GM12878 (cell line): ENCODE measurements at regions of chr19 and their contacts with region 1.

Region 1: DNA sequence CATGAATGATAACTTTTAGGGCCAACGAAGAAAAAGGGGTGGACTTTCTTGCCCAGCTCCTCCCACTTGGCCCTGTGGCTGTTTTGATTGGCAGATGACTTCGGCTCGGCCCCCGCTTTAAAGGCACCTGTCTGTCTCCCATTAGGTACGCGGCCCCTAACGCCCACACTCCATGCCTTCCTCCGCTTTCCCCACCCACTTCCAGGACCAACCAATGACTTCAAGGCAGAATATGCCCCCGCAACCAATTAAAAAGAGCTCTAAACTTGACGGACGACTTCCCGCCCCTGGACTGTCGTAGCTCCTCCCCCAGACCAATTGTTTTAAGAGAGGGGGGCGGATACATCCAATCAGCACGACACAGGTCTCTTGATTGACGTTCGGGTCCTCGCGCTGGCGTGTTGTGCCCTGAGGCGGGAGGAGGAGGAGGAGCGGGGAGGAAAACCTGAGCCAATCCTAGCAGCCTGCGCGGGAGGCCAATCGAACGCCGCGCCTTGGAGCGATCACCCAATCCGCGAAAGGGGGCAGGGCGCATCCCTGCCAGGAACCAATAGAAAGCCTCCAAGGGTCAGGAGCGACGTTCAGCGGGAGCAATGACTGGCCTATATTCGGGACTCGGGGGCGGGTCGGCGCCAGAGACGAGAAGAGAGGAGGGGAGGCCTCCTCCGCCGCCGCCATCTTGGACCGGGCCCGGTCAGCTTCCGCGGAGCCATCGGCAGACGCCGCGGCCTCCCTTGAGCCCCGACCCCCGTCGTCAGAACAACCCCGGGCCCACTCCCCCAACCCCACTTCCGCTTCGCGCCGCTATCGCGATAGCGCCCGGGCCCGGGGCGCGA is at the start of gene CNOT3:
- DNase-seq: peak; percentile 100
- ATAC-seq: peak; percentile 92
- H3K4me3 ChIP-seq: peak within 1 kb of the TSS; percentile 91
- H3K27ac ChIP-seq: peak within 1 kb of the TSS; percentile 90
- H3K4me1 ChIP-seq: peaks cover 19% of the 10 kb centered on the region
- H3K27me3 ChIP-seq: no peaks in the 10 kb centered on the region
- CTCF ChIP-seq: no peak
- EP300 ChIP-seq: no peak
- POLR2A ChIP-seq: peak; percentile 91
- RAD21 ChIP-seq: no peak
- polyA plus RNA-seq, gene CNOT3: 0.14 to 0.62 TPM

Region 2: DNA sequence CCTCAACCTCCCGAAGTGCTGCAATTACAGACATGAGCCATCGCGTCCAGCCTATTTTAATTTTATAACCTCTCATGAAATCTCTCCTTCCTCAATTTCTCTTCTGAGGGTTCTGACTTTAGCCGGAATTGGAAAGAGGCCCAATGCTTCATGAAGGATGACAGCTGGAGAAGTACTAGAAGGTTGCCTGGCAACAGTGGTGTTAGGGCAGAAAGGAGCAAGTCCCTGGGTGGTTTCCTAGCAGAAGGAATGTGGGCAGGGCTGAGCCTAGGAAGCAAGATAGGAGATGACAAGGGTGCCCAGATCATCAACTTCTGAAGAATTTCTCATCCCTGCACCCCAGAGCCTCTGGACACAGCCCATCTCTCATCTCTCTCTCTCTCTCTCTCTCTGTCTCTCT is 120.0 kb before region 1 on chr19:
- CTCF ChIA-PET with region 1: no interaction called
- POLR2A ChIA-PET with region 1: no interaction called
- RAD21 ChIA-PET with region 1: no interaction called
- SMC1A ChIA-PET with region 1: no interaction called
- in situ Hi-C with region 1: no loop called
- intact Hi-C with region 1: no loop called
- DNase-seq: no peak
- ATAC-seq: no peak
- H3K4me3 ChIP-seq: no peak overlapping the region
- H3K27ac ChIP-seq: no peak overlapping the region
- H3K4me1 ChIP-seq: no peaks in the 10 kb centered on the region
- H3K27me3 ChIP-seq: no peaks in the 10 kb centered on the region
- CTCF ChIP-seq: no peak
- EP300 ChIP-seq: no peak
- POLR2A ChIP-seq: no peak
- RAD21 ChIP-seq: no peak

Region 3: DNA sequence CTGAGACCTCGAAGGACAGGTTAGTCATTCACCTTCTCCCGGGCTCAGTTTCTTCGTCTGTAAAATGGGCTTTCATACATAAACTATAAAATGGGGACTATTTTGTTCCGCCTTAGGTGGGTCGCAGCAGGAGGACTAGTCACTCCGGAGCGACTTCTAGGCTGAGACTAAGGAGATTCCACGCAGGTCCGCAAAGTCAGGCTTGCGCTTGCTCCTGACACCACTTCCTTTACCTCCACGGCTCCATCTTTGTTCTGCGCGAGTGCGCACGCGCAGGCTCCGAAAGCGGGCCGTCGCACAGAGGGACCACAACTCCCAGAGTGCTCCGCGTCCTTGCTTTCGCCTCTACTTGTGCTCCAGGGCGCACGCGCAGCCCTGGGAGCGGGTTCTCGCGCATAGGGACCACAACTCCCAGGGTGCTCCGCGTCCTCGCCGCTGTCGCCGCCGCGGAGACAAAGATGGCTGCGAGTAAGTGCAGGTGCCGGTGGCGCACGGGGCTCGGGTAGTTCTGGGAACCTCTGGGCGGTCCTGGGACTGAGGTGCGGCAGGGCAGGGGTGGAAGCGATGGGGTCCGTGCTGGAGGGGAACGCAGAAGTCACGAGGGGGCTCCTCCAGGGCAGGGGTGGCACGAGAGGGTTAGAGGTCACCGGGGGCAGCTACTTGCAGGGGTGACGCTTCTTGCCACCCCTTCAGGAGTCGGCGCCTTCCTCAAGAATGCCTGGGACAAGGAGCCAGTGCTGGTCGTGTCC is 34.7 kb before region 1 on chr19 and contains the start of gene NDUFA3:
- CTCF ChIA-PET with region 1: interaction called, 3 read pairs
- POLR2A ChIA-PET with region 1: interaction called, 6 read pairs
- RAD21 ChIA-PET with region 1: no interaction called
- SMC1A ChIA-PET with region 1: no interaction called
- in situ Hi-C with region 1: no loop called
- intact Hi-C with region 1: loop called (anchors 1 kb)
- DNase-seq: peak; percentile 95
- ATAC-seq: peak; percentile 99
- H3K4me3 ChIP-seq: peak within 1 kb of the TSS; percentile 85
- H3K27ac ChIP-seq: peak within 1 kb of the TSS; percentile 75
- H3K4me1 ChIP-seq: no peaks in the 10 kb centered on the region
- H3K27me3 ChIP-seq: no peaks in the 10 kb centered on the region
- CTCF ChIP-seq: no peak
- EP300 ChIP-seq: no peak
- POLR2A ChIP-seq: peak; percentile 94
- RAD21 ChIP-seq: no peak
- polyA plus RNA-seq, gene NDUFA3: 295 to 302 TPM

Region 4: DNA sequence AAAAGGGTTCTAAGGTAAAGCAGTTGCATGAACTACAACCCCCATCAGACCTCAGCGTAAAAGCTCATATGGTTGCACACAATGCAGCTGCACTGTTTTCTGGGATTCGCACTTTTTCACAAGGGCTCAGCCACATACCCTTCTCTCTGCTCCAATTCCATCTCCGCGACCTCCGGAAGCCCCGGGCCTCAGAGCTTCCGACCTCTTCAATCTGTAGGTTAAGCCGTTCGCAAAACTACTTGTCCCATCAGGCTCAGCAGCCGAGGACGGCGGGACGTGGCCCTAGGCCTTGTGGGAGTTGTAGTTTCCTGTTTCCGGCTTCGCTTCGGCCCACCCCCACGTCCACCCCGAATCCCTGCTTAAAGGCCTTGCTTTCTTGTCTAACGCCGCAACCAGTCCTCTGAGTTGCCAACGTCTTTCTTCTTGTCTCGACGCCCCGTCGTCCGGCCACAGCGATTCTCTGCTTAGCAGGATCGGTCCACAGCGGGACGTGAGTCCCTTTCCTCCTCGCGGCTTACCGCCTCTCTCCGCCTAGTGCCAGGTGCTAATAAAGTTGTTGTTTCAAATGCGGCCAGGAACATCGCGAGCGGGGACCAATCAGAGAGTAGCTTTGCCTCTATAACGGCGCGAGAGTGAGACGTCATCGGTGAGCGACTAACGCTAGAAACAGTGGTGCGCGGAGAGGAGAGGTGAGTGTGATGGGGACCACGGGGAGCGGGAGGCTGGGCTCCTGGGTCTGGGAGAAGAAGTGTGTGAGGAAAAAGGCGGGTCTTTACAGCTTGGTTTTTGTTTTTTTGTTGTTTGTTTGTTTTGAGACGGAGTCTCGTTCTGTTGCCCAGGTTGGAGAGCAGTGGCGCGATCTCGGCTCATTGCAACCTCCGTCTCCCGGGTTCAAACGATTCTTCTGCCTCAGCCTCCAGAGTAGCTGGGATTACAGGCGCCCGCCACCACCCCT is 21.9 kb before region 1 on chr19 and contains the starts of genes PRPF31 and TFPT:
- CTCF ChIA-PET with region 1: no interaction called
- POLR2A ChIA-PET with region 1: interaction called, 25 read pairs
- RAD21 ChIA-PET with region 1: interaction called, 19 read pairs
- SMC1A ChIA-PET with region 1: interaction called, 6 read pairs
- in situ Hi-C with region 1: no loop called
- intact Hi-C with region 1: no loop called
- DNase-seq: peak; percentile 95
- ATAC-seq: peak; percentile 97
- H3K4me3 ChIP-seq: peak within 1 kb of the TSS; percentile 95
- H3K27ac ChIP-seq: peak within 1 kb of the TSS; percentile 79
- H3K4me1 ChIP-seq: peaks cover 10% of the 10 kb centered on the region
- H3K27me3 ChIP-seq: no peaks in the 10 kb centered on the region
- CTCF ChIP-seq: no peak
- EP300 ChIP-seq: no peak; a peak in 1 of 4 replicates
- POLR2A ChIP-seq: peak; percentile 77; the same call in 1 of the 2 replicates
- RAD21 ChIP-seq: no peak
- polyA plus RNA-seq, gene PRPF31: 2.7 to 9.8 TPM
- polyA plus RNA-seq, gene TFPT: 1.7 to 10.9 TPM

Region 5: DNA sequence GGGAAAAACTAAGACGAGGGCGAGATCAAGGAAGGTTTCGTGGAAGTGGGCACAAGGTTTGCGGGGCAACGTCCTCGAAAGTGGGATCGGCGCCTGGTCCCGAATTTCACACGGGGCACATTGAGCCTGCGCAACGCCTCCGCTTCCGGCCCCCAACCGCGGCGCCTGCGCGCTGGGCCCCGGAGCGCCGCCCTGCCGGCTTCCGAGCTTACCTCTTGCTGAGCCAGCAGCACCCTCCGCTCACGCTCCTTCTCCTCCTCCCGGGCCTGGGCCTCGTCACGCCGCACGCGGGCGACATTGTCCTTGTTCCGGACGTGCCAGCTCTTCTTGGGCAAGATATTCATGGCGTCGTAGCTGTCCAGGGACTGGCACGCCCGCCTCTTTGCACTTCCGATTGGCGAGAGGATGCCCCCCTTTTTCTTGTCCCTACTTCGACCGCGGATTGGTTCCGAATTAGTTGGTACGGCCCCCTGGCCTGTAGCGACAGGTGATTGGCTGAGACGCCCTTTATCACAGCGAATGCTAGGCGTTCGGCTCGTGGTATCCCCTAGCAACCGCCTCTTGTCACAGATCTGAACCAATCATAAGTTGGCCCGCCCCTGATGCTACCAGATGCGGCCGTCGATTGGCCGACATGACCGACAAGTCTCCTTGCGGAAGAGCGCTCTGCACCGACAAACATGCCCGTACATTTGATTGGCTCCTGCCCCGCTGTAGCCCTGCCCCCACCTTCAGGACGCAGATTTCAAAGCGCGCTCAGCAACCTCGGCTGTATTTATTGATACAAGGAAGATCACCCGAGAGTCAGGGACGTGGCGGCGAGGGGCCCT is 22.3 kb after region 1 on chr19 and contains the start of gene LENG1:
- CTCF ChIA-PET with region 1: interaction called, 15 read pairs
- POLR2A ChIA-PET with region 1: interaction called, 30 read pairs
- RAD21 ChIA-PET with region 1: interaction called, 14 read pairs
- SMC1A ChIA-PET with region 1: interaction called, 5 read pairs
- in situ Hi-C with region 1: no loop called
- intact Hi-C with region 1: loop called (anchors 1 kb)
- DNase-seq: peak; percentile 99
- ATAC-seq: peak; percentile 95
- H3K4me3 ChIP-seq: peak within 1 kb of the TSS; percentile 95
- H3K27ac ChIP-seq: peak within 1 kb of the TSS; percentile 93
- H3K4me1 ChIP-seq: peaks cover 4% of the 10 kb centered on the region; the same call in 1 of the 2 replicates
- H3K27me3 ChIP-seq: no peaks in the 10 kb centered on the region
- CTCF ChIP-seq: peak in 2 of 3 experiments; percentile 16 to 34; a peak in 3 of 6 replicates
- EP300 ChIP-seq: no peak
- POLR2A ChIP-seq: peak; percentile 94
- RAD21 ChIP-seq: no peak
- polyA plus RNA-seq, gene LENG1: 0.21 to 1.1 TPM

Region 6: DNA sequence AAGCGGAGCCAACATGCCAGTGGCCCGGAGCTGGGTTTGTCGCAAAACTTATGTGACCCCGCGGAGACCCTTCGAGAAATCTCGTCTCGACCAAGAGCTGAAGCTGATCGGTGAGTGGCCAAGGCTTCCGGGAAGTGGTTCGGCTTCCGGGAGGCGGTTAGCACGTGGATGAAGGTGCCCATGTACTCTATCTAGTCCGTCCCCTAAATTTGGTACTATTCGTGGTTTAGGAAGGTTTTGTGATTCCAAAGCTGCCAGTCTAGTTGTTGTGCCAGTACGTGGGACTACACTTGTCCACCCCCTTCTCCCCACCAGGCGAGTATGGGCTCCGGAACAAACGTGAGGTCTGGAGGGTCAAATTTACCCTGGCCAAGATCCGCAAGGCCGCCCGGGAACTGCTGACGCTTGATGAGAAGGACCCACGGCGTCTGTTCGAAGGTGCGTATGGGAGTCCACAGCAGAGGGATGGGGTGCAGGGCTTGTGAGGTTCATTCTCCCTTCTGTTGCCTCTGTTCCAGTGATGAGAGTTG is 63.9 kb after region 1 on chr19:
- CTCF ChIA-PET with region 1: no interaction called
- POLR2A ChIA-PET with region 1: interaction called, 11 read pairs
- RAD21 ChIA-PET with region 1: no interaction called
- SMC1A ChIA-PET with region 1: interaction called, 4 read pairs
- in situ Hi-C with region 1: no loop called
- intact Hi-C with region 1: loop called (anchors 2 kb)
- DNase-seq: no peak
- ATAC-seq: peak; percentile 8
- H3K4me3 ChIP-seq: peak overlapping the region; percentile 92
- H3K27ac ChIP-seq: peak overlapping the region; percentile 96
- H3K4me1 ChIP-seq: peaks cover 19% of the 10 kb centered on the region
- H3K27me3 ChIP-seq: no peaks in the 10 kb centered on the region
- CTCF ChIP-seq: no peak
- EP300 ChIP-seq: no peak
- POLR2A ChIP-seq: no peak
- RAD21 ChIP-seq: no peak